ENCODE measurements at regions of chr6 and their contacts with region 1.

Region 1: DNA sequence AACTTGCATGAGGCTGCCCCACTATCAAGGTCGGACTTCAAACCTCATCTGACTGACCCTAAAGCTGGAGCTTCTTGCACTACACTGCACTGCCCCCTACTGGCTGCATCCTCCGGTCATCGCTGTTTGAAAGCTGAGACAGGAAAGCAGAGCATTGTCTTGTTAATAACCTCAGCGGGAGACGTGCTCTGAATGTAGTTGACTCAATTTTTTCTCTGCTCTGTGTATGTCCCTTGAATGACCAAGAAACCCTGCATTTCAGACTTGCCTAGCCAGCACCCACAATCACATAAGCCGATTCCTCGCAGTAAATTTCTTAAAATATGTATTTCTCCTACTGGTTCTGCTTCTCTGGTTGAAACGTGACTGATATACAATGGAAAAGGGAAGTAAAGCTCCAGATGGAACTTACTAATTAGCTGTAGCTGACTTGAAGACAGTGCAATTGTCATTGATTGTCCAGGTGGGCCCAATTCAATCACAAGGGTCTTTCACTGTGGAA is 27.8 kb downstream of the TCF21 start:
- DNase-seq: peak; percentile 49 to 61 (median 56)
- H3K4me3 ChIP-seq: no peak overlapping the region
- H3K4me3 Mint-ChIP-seq: peak overlapping the region in 2 of 8 donors; percentile 7 to 37
- H3K27ac ChIP-seq: no peak overlapping the region
- H3K27ac Mint-ChIP-seq: no peak overlapping the region
- H3K4me1 ChIP-seq: no peaks in the 10 kb centered on the region
- H3K4me1 Mint-ChIP-seq: peaks cover 0 to 4% (median 2%) of the 10 kb centered on the region in 4 donors
- H3K27me3 ChIP-seq: no peaks in the 10 kb centered on the region
- H3K27me3 Mint-ChIP-seq: peaks cover 4 to 6% of the 10 kb centered on the region in 2 donors

Region 2: GRCh38 chr6:132167929-132168892 is 1748.5 kb before region 1 on chr6:
- CTCF ChIA-PET with region 1: no interaction called
- POLR2A ChIA-PET with region 1: no interaction called
- intact Hi-C with region 1: no loop called
- DNase-seq: no peak
- H3K4me3 ChIP-seq: no peak overlapping the region
- H3K4me3 Mint-ChIP-seq: no peak overlapping the region
- H3K27ac ChIP-seq: no peak overlapping the region
- H3K27ac Mint-ChIP-seq: no peak overlapping the region
- H3K4me1 ChIP-seq: no peaks in the 10 kb centered on the region
- H3K4me1 Mint-ChIP-seq: no peaks in the 10 kb centered on the region
- H3K27me3 ChIP-seq: no peaks in the 10 kb centered on the region
- H3K27me3 Mint-ChIP-seq: peaks cover 3% of the 10 kb centered on the region in 2 donors

Region 3: DNA sequence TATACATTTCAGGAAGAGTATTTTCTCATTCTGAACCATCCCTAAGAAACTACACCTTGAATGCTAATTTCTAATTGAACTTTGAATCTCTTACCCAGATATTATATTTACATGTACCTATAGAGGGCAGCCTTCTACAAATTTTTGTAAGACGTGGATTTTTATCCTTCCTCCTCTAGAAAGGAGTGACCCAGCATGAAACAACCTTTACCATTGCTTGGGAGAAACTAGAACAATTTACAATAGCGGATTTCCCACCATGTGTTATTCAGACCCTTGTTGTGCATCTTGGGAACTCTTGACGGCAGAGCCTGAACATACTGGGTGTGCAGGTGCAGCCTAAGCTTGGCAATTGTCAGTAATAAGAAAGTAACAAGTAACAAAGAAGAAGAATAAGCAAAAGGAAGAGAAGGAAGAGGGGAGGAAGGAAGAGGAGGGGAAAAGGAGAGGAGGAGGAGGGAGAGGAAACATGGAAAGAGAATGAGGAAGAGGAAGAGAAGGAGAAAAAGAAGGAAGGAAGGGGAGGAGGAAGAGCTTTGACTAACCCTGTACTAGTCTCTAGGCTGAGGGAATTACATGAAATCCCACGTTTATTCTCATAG is 1246.9 kb before region 1 on chr6:
- CTCF ChIA-PET with region 1: interaction called, 11 read pairs
- POLR2A ChIA-PET with region 1: no interaction called
- intact Hi-C with region 1: loop called (anchors 2 kb)
- DNase-seq: peak in 4 of 5 donors; percentile 22 to 39 (median 36)
- H3K4me3 ChIP-seq: no peak overlapping the region
- H3K4me3 Mint-ChIP-seq: no peak overlapping the region
- H3K27ac ChIP-seq: no peak overlapping the region
- H3K27ac Mint-ChIP-seq: no peak overlapping the region
- H3K4me1 ChIP-seq: peaks cover 4% of the 10 kb centered on the region
- H3K4me1 Mint-ChIP-seq: peaks cover 0 to 4% (median 3%) of the 10 kb centered on the region in 4 donors
- H3K27me3 ChIP-seq: no peaks in the 10 kb centered on the region
- H3K27me3 Mint-ChIP-seq: peaks cover 2 to 6% of the 10 kb centered on the region in 2 donors

Region 4: DNA sequence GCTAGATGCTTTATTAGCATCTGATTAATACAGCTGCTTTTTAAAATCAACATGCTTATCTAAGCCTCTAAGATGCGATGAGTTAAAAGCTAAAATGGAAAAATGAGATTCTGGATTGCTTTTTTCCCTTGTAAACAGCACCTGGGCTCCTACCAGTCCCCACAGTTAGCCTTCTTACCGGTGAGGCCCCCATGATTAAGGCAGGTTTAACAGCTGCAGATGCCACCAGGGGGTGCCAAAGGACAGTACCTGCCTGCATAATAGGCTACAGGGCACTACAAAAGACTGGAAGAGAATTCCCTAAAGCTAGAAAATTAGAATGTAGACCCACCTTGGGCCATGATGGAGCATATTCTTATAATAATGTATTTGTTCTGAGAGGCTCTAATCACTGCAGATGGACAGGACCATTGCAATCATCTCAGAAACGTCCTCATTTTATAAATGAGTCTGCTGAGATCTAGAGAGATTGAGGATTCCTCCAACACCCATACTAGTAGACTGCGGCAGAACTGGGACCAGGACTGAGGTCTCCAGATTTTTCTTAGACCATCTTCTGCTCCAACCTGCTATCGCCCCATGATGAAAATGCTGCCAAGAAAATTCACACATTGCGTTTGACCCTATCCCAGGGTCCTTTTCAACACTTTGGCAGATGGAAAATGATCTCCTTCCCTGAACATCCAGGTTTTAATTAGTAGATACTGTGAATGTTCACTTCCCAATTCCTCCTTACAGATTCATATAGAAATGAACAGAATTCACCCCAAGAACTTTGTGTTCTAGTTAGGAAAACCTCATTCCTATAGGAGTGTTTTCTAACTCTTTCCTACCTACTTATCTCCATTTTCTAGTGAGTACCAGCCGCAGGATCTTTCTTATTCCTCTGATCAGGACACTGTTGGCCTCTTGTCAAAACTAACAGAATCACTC is 953.5 kb before region 1 on chr6:
- CTCF ChIA-PET with region 1: interaction called, 3 read pairs
- POLR2A ChIA-PET with region 1: no interaction called
- intact Hi-C with region 1: loop called (anchors 2 kb)
- DNase-seq: peak in 4 of 5 donors; percentile 17 to 32 (median 18)
- H3K4me3 ChIP-seq: no peak overlapping the region
- H3K4me3 Mint-ChIP-seq: no peak overlapping the region
- H3K27ac ChIP-seq: no peak overlapping the region
- H3K27ac Mint-ChIP-seq: no peak overlapping the region
- H3K4me1 ChIP-seq: no peaks in the 10 kb centered on the region
- H3K4me1 Mint-ChIP-seq: no peaks in the 10 kb centered on the region
- H3K27me3 ChIP-seq: no peaks in the 10 kb centered on the region
- H3K27me3 Mint-ChIP-seq: peaks cover 6 to 13% of the 10 kb centered on the region in 2 donors

Region 5: DNA sequence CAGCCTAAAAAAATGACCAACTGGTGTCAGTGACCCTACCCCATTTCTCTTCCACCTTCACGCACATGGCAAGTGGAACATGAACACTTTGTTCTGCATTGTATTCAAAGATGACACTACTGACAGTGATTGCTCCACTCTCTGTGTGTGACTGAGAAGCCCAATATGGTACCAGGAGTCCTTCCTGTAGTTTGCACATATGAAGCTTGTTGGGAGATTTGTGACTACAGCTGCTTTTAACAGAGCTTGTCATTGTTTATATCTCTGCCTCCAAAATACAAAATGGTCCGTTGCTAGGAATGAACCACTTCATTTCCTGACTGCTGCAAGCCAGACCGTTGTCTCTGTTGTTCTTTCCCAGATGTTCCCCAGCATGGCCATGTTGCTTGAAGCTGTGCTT is 168.1 kb before region 1 on chr6:
- CTCF ChIA-PET with region 1: no interaction called
- POLR2A ChIA-PET with region 1: no interaction called
- intact Hi-C with region 1: no loop called
- DNase-seq: no peak
- H3K4me3 ChIP-seq: no peak overlapping the region
- H3K4me3 Mint-ChIP-seq: no peak overlapping the region
- H3K27ac ChIP-seq: no peak overlapping the region
- H3K27ac Mint-ChIP-seq: no peak overlapping the region
- H3K4me1 ChIP-seq: no peaks in the 10 kb centered on the region
- H3K4me1 Mint-ChIP-seq: no peaks in the 10 kb centered on the region
- H3K27me3 ChIP-seq: no peaks in the 10 kb centered on the region
- H3K27me3 Mint-ChIP-seq: no peaks in the 10 kb centered on the region

Region 6: DNA sequence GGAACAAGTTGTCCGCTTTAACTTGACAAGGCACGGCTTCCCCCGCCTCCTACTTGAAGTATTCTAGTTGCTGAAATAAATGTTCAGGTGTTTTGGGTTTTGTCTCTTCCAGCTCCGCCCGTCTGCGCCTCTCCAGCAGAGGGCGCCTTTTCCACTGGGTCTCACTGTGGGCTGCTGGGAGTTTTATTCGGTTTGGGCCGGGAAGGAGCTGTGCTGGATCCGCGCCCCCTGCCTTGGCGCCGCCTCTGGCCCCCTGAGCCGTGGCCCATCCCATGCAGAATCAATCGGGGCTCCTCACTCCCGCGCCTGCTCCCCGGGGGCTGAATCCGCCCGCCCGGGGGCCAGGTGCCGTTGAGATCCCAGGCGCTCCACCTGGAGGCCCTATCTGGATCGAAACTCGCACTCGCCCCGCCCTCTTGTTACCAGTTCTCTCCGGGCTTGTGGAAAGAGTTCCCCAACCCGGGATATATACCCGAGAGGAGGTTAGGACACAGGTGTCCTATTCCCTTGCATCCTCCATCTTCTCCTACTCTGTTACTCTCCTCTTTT is 78.8 kb before region 1 on chr6:
- CTCF ChIA-PET with region 1: interaction called, 6 read pairs
- POLR2A ChIA-PET with region 1: no interaction called
- intact Hi-C with region 1: loop called (anchors 2 kb)
- DNase-seq: peak in 4 of 5 donors; percentile 45 to 55 (median 50)
- H3K4me3 ChIP-seq: peak overlapping the region in 1 of 2 donors; percentile 39
- H3K4me3 Mint-ChIP-seq: peak overlapping the region; percentile 23 to 86 (median 68)
- H3K27ac ChIP-seq: no peak overlapping the region
- H3K27ac Mint-ChIP-seq: no peak overlapping the region
- H3K4me1 ChIP-seq: no peaks in the 10 kb centered on the region
- H3K4me1 Mint-ChIP-seq: peaks cover 0 to 8% (median 5%) of the 10 kb centered on the region in 4 donors
- H3K27me3 ChIP-seq: no peaks in the 10 kb centered on the region
- H3K27me3 Mint-ChIP-seq: peaks cover 11 to 20% of the 10 kb centered on the region in 2 donors

Region 7: DNA sequence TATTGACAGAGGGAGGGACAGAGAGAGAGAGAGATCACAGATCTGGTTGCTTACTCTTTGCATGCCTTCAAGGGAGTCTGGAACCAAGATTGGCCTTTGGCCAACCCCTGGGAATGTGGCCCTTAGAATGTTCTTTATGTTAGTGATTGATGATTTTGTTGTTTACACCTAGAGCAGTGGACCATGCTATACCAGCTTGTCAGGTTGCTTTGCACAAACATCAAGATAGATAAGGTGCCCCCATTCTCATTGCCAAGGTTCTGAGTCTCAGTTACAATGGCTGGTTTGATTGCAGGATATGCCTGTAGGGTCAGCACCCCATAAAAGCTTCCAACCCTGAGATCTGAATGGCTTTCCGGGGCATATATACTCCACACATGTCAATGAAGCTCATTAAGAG is 189.2 kb after region 1 on chr6:
- CTCF ChIA-PET with region 1: interaction called, 281 read pairs
- POLR2A ChIA-PET with region 1: no interaction called
- intact Hi-C with region 1: no loop called
- DNase-seq: no peak
- H3K4me3 ChIP-seq: no peak overlapping the region
- H3K4me3 Mint-ChIP-seq: no peak overlapping the region
- H3K27ac ChIP-seq: no peak overlapping the region
- H3K27ac Mint-ChIP-seq: no peak overlapping the region
- H3K4me1 ChIP-seq: no peaks in the 10 kb centered on the region
- H3K4me1 Mint-ChIP-seq: no peaks in the 10 kb centered on the region
- H3K27me3 ChIP-seq: no peaks in the 10 kb centered on the region
- H3K27me3 Mint-ChIP-seq: peaks cover 3 to 9% of the 10 kb centered on the region in 2 donors